Activated CD4-positive, alpha-beta memory T cell treated with anti-CD3 and anti-CD28 coated beads for 36 hours (primary cell): ENCODE measurements at regions of chr10 and their contacts with region 1.

Region 1: GRCh38 chr10:59830601-59831259 is 75.6 kb downstream of the CCDC6 start:
- DNase-seq: peak; percentile 32
- H3K4me3 Mint-ChIP-seq: no peak overlapping the region
- H3K27ac Mint-ChIP-seq: no peak overlapping the region
- H3K4me1 Mint-ChIP-seq: peaks cover 52% of the 10 kb centered on the region
- H3K27me3 Mint-ChIP-seq: no peaks in the 10 kb centered on the region

Region 2: DNA sequence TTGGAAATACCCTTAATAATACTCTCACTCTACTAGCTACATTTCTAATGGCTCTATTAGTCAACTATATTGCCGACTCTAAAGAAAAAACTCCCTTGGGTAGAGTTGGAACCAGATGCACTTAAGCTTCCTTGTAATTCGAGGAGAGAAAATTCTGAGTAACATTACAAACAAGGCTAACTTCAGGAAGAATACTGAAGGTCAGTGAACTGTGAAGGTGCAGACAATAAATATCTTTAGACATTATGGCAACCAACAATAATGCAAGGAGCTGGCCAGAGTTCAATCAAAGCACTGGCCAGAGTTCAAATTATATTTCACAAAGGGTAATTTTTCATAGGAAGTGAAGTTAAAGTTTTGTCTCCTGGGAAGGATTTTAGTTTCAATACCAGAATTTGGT is 36.8 kb before region 1 on chr10:
- CTCF ChIA-PET with region 1: no interaction called
- POLR2A ChIA-PET with region 1: no interaction called
- intact Hi-C with region 1: no loop called
- DNase-seq: no peak
- H3K4me3 Mint-ChIP-seq: no peak overlapping the region
- H3K27ac Mint-ChIP-seq: no peak overlapping the region
- H3K4me1 Mint-ChIP-seq: peaks cover 6% of the 10 kb centered on the region
- H3K27me3 Mint-ChIP-seq: no peaks in the 10 kb centered on the region

Region 3: GRCh38 chr10:59817773-59818172 is 13.0 kb before region 1 on chr10:
- CTCF ChIA-PET with region 1: interaction called, 26 read pairs
- POLR2A ChIA-PET with region 1: no interaction called
- intact Hi-C with region 1: no loop called
- DNase-seq: no peak
- H3K4me3 Mint-ChIP-seq: no peak overlapping the region
- H3K27ac Mint-ChIP-seq: no peak overlapping the region
- H3K4me1 Mint-ChIP-seq: peaks cover 47% of the 10 kb centered on the region
- H3K27me3 Mint-ChIP-seq: no peaks in the 10 kb centered on the region

Region 4: DNA sequence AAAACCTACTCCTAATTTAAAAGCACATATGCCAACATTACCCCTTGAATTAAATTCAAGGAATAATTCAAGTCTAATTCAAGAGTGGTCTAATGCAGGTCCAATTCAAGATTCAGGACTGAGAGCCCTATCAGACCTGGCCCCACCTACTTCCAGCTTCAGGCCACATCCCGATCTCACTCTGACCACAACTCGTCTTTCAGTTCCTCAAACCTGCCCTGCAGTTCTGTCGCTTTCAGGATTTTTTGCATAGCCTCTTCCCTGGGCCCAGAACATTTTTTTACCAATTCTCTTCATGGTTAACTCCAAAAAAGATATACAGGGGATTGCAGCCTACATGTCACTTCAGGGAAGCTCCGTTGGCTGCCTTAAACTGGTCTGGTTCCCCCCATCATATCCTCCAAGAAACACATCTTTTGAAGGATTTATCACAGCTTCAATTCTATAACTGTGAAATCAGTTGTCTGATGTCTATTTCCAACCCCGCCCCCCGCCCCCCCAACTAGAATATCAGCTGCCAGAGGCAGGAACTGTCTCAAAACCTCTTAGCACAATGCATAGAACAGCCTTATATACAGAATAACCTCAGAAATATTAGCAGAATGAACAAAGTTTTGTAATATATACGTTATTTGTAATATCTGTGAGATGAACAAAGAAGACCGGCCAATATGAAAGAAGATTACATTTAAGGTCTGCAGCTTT is 54.9 kb after region 1 on chr10:
- CTCF ChIA-PET with region 1: no interaction called
- POLR2A ChIA-PET with region 1: interaction called, 3 read pairs
- intact Hi-C with region 1: loop called (anchors 2 kb)
- DNase-seq: peak; percentile 44
- H3K4me3 Mint-ChIP-seq: no peak overlapping the region
- H3K27ac Mint-ChIP-seq: peak overlapping the region; percentile 96
- H3K4me1 Mint-ChIP-seq: peaks cover 87% of the 10 kb centered on the region
- H3K27me3 Mint-ChIP-seq: no peaks in the 10 kb centered on the region